A673 (cell line): ENCODE measurements at regions of chr5 and their contacts with region 1.

Region 1: GRCh38 chr5:168076561-168076991 is 214.9 kb upstream of the WWC1 start:
- DNase-seq: peak; percentile 89
- H3K4me3 ChIP-seq: no peak overlapping the region
- H3K27ac ChIP-seq: peak overlapping the region; percentile 63
- H3K4me1 ChIP-seq: peaks cover 53% of the 10 kb centered on the region
- H3K27me3 ChIP-seq: no peaks in the 10 kb centered on the region
- CTCF ChIP-seq: peak; percentile 80

Region 2: DNA sequence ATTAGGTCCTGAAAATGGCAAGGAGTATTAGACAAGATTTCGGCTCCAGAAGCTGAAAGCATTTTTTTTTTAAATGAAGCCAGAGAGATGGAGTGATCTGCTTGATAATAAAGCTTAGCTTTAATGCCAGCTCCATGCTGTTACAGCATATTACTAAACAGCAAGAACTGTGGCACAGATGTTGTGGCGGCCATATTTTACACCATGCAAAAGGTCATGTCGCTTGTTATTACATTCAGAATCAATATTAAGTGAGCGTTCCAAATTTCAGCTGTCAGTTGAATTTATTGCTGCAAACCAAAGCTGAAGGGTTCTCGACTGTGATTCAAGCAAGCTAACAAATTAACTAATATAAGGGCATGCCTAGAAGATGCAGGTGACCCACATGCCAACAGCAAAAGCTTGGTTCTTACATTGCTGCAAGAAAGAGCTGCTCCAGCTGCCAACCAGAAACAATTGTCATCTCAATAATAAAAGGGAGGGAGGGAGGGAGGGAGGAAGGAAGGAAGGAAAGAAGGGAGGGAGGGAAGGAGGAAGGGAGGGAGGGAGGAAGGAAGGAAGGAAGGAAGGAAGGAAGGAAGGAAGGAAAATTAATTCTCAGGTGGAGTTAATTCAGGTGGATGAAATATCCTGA is 302.8 kb before region 1 on chr5:
- CTCF ChIA-PET with region 1: no interaction called
- POLR2A ChIA-PET with region 1: interaction called, 10 read pairs
- intact Hi-C with region 1: no loop called
- DNase-seq: peak; percentile 51
- H3K4me3 ChIP-seq: no peak overlapping the region
- H3K27ac ChIP-seq: peak overlapping the region; percentile 56
- H3K4me1 ChIP-seq: peaks cover 42% of the 10 kb centered on the region
- H3K27me3 ChIP-seq: no peaks in the 10 kb centered on the region
- CTCF ChIP-seq: no peak

Region 3: DNA sequence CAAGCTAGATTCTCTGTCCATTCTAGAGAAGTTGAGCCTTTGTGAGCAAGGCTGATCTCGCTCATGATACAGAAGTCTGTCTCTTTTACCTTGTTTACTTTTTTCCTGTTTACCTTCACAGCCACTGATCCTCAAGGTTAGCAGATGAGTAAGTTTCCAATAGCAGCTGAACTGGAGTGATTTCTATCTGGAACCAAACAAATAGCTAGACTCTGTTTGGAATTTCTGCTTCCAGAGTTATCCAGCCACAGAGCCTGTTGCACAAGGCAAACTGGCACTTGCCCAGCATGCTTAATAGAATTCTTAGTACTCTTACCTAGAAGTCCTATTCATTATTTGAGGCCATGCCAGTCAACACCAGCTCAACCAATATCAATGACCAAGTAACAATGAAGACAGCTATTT is 515.4 kb after region 1 on chr5:
- CTCF ChIA-PET with region 1: no interaction called
- POLR2A ChIA-PET with region 1: no interaction called
- intact Hi-C with region 1: no loop called
- DNase-seq: no peak
- H3K4me3 ChIP-seq: no peak overlapping the region
- H3K27ac ChIP-seq: no peak overlapping the region
- H3K4me1 ChIP-seq: no peaks in the 10 kb centered on the region
- H3K27me3 ChIP-seq: peaks cover 2% of the 10 kb centered on the region
- CTCF ChIP-seq: no peak